HAP-1 (cell line): ENCODE measurements at regions of chr3 and their contacts with region 1.

Region 1: DNA sequence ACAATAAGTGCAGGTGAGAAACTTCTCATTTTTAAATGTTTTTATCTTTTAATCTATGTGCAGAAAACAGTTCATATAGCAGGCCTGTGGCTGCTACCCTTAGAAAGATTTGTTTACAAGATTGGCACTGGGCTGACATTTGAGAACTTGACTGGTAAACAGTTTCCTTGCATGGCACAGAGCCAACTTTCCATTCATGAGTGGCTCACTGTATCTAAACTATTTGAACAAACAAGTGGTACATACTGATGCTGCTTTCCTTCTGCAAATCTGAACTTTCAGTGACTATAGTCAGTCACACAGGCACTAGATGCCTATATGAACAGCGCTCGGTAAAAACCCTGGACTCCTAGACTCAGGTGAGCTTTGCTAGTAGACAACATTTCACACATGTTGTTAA is 6.3 kb upstream of the GTPBP8 start:
- DNase-seq: no peak
- H3K4me3 ChIP-seq: no peak overlapping the region
- H3K4me1 ChIP-seq: no peaks in the 10 kb centered on the region
- H3K27me3 ChIP-seq: peaks cover 3% of the 10 kb centered on the region; the same call in 1 of the 2 replicates

Region 2: GRCh38 chr3:112642912-112643506 is 341.5 kb before region 1 on chr3:
- in situ Hi-C with region 1: loop called (anchors 10 kb)
- DNase-seq: peak; percentile 86 to 92
- H3K4me3 ChIP-seq: no peak overlapping the region
- H3K4me1 ChIP-seq: peaks cover 26% of the 10 kb centered on the region
- H3K27me3 ChIP-seq: no peaks in the 10 kb centered on the region

Region 3: DNA sequence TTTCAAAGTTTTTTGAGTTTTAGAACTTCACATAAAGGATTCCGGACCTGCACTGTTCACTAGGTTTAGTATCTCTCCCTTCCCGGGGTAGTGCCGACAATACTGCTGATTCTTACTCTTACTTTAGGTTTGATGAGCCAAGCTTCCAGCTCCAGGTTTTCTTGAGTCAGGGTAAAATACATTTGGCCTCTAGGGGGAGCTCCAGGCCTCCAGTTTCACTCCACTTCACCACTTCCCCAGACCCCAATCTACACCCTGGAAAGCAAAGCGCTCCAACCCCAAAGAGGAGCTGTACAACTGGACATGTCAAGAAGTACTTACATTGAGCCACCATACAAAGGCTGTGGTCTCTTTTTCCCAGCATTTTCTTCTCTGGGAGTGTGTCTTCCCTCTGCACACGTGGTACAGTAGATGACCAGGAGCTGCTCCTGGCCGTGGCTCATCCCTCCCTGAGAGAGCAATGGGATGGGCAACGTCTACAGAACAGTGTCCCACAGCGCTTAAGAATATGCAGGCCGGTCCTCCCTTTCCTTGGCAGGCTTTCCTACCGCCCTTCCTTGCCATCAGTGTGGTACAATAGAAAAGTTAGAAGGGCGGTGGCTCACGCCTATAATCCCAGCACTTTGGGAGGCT is 249.7 kb before region 1 on chr3:
- in situ Hi-C with region 1: loop called (anchors 10 kb)
- DNase-seq: peak; percentile 68 to 84
- H3K4me3 ChIP-seq: no peak overlapping the region
- H3K4me1 ChIP-seq: no peaks in the 10 kb centered on the region; the same call in 1 of the 2 replicates
- H3K27me3 ChIP-seq: no peaks in the 10 kb centered on the region